HCT116 (cell line): ENCODE measurements at regions of chr5 and their contacts with region 1.

Region 1: GRCh38 chr5:50962934-50963872 is 296.8 kb downstream of the PARP8 start:
- DNase-seq: peak; percentile 48
- ATAC-seq: peak; percentile 99
- H3K4me3 ChIP-seq: no peak overlapping the region
- H3K27ac ChIP-seq: no peak overlapping the region
- H3K4me1 ChIP-seq: no peaks in the 10 kb centered on the region; a peak in 1 of 4 replicates
- H3K27me3 ChIP-seq: no peaks in the 10 kb centered on the region
- CTCF ChIP-seq: peak; percentile 98 to 99 (median 99)
- POLR2A ChIP-seq: no peak
- RAD21 ChIP-seq: peak; percentile 93

Region 2: DNA sequence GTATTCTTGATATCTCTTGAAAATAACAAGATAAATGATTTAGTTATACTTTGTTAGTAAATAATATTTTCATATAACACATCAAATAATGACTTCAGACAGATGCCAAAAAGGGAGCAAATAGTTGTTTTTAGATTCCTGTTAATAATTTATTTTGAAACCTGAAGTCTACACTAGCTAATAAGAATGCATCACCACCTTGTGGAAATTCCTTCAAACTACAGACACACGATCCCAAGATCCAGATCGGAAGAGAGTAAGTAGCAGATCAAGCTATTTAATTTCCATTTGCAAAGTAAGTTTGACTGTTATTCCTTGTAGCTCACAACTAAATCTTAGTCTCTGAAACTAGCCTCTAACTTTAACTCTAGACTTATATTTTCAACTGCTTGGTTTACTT is 384.5 kb after region 1 on chr5:
- CTCF ChIA-PET with region 1: interaction called, 13 read pairs
- POLR2A ChIA-PET with region 1: no interaction called
- RAD21 ChIA-PET with region 1: no interaction called
- intact Hi-C with region 1: loop called (anchors 5 kb)
- DNase-seq: peak; percentile 12
- ATAC-seq: no peak
- H3K4me3 ChIP-seq: no peak overlapping the region
- H3K27ac ChIP-seq: no peak overlapping the region
- H3K4me1 ChIP-seq: peaks cover 0 to 9% of the 10 kb centered on the region in 2 experiments; a peak in 1 of 4 replicates
- H3K27me3 ChIP-seq: no peaks in the 10 kb centered on the region
- CTCF ChIP-seq: peak; percentile 10 to 37 (median 15); a peak in 3 of 6 replicates
- POLR2A ChIP-seq: no peak
- RAD21 ChIP-seq: peak; percentile 40

Region 3: DNA sequence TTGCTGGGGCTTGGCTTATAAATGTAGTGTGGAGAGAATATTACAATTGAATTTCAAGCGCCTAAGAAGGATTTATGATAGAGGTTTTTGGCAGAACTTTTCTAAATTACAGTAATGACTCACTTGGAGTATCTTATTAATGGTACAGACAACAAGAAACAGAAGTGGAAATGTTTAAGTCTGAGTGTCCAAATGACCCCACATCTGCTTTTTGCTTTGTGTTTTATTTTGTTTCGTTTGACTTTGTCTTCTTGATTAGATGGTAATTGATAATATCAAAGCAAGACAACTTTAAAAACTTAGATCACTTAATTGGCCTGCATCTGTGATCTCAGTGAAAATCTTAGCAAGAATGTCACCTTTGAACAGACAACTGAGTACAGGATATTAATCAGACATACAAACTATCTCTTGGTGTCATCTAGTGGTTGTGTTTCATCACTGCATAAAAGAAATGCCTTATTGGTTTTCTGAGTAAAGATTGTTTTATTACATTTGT is 997.5 kb after region 1 on chr5:
- CTCF ChIA-PET with region 1: interaction called, 3 read pairs
- POLR2A ChIA-PET with region 1: no interaction called
- RAD21 ChIA-PET with region 1: no interaction called
- intact Hi-C with region 1: loop called (anchors 2 kb)
- DNase-seq: peak; percentile 7
- ATAC-seq: peak; percentile 60
- H3K4me3 ChIP-seq: no peak overlapping the region
- H3K27ac ChIP-seq: no peak overlapping the region
- H3K4me1 ChIP-seq: no peaks in the 10 kb centered on the region
- H3K27me3 ChIP-seq: no peaks in the 10 kb centered on the region
- CTCF ChIP-seq: peak; percentile 31 to 56 (median 38); a peak in 4 of 6 replicates
- POLR2A ChIP-seq: no peak
- RAD21 ChIP-seq: peak; percentile 65

Region 4: GRCh38 chr5:52119768-52120167 is 1156.6 kb after region 1 on chr5:
- CTCF ChIA-PET with region 1: no interaction called
- POLR2A ChIA-PET with region 1: no interaction called
- RAD21 ChIA-PET with region 1: no interaction called
- intact Hi-C with region 1: loop called (anchors 10 kb)
- DNase-seq: no peak
- ATAC-seq: no peak
- H3K4me3 ChIP-seq: no peak overlapping the region
- H3K27ac ChIP-seq: no peak overlapping the region
- H3K4me1 ChIP-seq: no peaks in the 10 kb centered on the region
- H3K27me3 ChIP-seq: no peaks in the 10 kb centered on the region
- CTCF ChIP-seq: peak in 2 of 3 experiments; percentile 29 to 42; a peak in 2 of 6 replicates
- POLR2A ChIP-seq: no peak
- RAD21 ChIP-seq: 0 out of 2 replicates have a peak, but pooled peaks have one; percentile 5

Region 5: DNA sequence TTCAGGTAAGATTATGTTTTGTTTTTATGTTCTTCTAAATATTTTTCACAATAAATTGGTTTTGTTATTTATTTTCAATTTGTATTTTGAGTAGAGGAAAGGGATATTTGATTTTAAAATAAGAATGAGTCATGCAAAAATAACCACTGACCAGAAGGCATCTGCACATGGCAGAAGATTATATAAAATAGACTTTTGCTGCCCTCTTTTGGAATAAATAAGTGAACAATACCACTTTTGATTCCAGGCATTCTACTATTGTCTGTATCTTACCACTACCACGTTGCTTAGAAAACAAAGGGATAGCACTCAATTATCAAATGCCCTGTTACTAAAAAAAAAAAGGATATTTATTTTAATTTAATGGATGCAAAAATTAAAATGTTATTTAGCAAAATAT is 1597.2 kb after region 1 on chr5:
- CTCF ChIA-PET with region 1: no interaction called
- POLR2A ChIA-PET with region 1: no interaction called
- RAD21 ChIA-PET with region 1: no interaction called
- intact Hi-C with region 1: loop called (anchors 5 kb)
- DNase-seq: peak; percentile 3
- ATAC-seq: no peak
- H3K4me3 ChIP-seq: no peak overlapping the region
- H3K27ac ChIP-seq: no peak overlapping the region
- H3K4me1 ChIP-seq: no peaks in the 10 kb centered on the region
- H3K27me3 ChIP-seq: no peaks in the 10 kb centered on the region
- CTCF ChIP-seq: no peak; a peak in 1 of 6 replicates
- POLR2A ChIP-seq: no peak
- RAD21 ChIP-seq: peak; percentile 43; the same call in 1 of the 2 replicates